CD8-positive, alpha-beta T cell (primary cell): ENCODE measurements at regions of chr22 and their contacts with region 1.

Region 1: GRCh38 chr22:39973656-39974055 is 13.5 kb downstream of the TMA7B start:
- DNase-seq: no peak
- ATAC-seq: no peak
- H3K4me3 ChIP-seq: no peak overlapping the region
- H3K4me3 Mint-ChIP-seq: no peak overlapping the region
- H3K27ac ChIP-seq: no peak overlapping the region
- H3K27ac Mint-ChIP-seq: peak overlapping the region; percentile 86
- H3K4me1 ChIP-seq: no peaks in the 10 kb centered on the region
- H3K4me1 Mint-ChIP-seq: peaks cover 4% of the 10 kb centered on the region
- H3K27me3 ChIP-seq: no peaks in the 10 kb centered on the region
- H3K27me3 Mint-ChIP-seq: no peaks in the 10 kb centered on the region
- CTCF ChIP-seq: no peak

Region 2: GRCh38 chr22:39935612-39936011 is 38.0 kb before region 1 on chr22:
- CTCF ChIA-PET with region 1: no interaction called
- POLR2A ChIA-PET with region 1: no interaction called
- intact Hi-C with region 1: no loop called
- DNase-seq: peak in 2 of 9 experiments; percentile 36 to 60
- ATAC-seq: no peak
- H3K4me3 ChIP-seq: peak overlapping the region in 1 of 2 experiments; percentile 35
- H3K4me3 Mint-ChIP-seq: peak overlapping the region; percentile 73
- H3K27ac ChIP-seq: peak overlapping the region; percentile 72
- H3K27ac Mint-ChIP-seq: no peak overlapping the region
- H3K4me1 ChIP-seq: peaks cover 99% of the 10 kb centered on the region
- H3K4me1 Mint-ChIP-seq: peaks cover 76% of the 10 kb centered on the region
- H3K27me3 ChIP-seq: no peaks in the 10 kb centered on the region
- H3K27me3 Mint-ChIP-seq: no peaks in the 10 kb centered on the region
- CTCF ChIP-seq: no peak

Region 3: DNA sequence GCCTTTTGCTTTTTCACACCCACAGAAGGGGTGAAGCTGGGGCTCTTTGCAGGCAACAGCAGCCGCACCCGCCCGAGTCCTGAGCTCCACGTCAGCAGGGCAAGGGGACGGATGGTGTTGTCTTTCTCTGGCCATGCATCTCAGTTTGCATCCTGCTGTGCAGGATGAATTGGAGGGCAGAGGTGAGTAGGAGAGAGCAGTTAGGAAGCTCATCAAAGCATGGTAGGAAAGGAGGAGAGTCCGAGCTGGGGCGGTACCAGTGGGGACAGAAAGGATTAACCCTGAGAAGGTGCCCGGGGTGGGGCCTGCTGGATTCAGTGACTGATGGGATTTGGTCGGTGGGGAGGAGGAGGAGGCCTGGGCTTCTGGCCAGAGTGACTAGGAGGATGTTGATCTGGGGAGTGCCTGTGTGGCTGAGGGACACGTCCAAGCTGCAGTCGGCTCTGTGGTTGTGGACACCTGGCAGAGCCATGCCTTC is 35.7 kb after region 1 on chr22:
- CTCF ChIA-PET with region 1: no interaction called
- POLR2A ChIA-PET with region 1: no interaction called
- intact Hi-C with region 1: loop called in 1 of 2 experiments (anchors 5 kb)
- DNase-seq: no peak
- ATAC-seq: no peak
- H3K4me3 ChIP-seq: no peak overlapping the region
- H3K4me3 Mint-ChIP-seq: peak overlapping the region; percentile 81
- H3K27ac ChIP-seq: no peak overlapping the region
- H3K27ac Mint-ChIP-seq: peak overlapping the region; percentile 88
- H3K4me1 ChIP-seq: peaks cover 11% of the 10 kb centered on the region
- H3K4me1 Mint-ChIP-seq: peaks cover 10% of the 10 kb centered on the region
- H3K27me3 ChIP-seq: peaks cover 0 to 4% of the 10 kb centered on the region in 2 experiments
- H3K27me3 Mint-ChIP-seq: peaks cover 11% of the 10 kb centered on the region
- CTCF ChIP-seq: no peak